HepG2 (cell line): ENCODE measurements at regions of chr22 and their contacts with region 1.

Region 1: GRCh38 chr22:36350751-36351594 is 36.8 kb downstream of the MYH9 start:
- DNase-seq: peak; percentile 91
- ATAC-seq: peak; percentile 68
- H3K4me3 ChIP-seq: peak overlapping the region; percentile 9 to 66 (median 28)
- H3K27ac ChIP-seq: peak overlapping the region; percentile 94
- H3K4me1 ChIP-seq: peaks cover 93% of the 10 kb centered on the region
- H3K27me3 ChIP-seq: no peaks in the 10 kb centered on the region; a peak in 1 of 5 replicates
- CTCF ChIP-seq: peak; percentile 24; the same call in 1 of the 2 replicates
- EP300 ChIP-seq: peak; percentile 42 to 88; a peak in 3 of 4 replicates
- POLR2A ChIP-seq: no peak; a peak in 1 of 4 replicates
- RAD21 ChIP-seq: 0 out of 2 replicates have a peak, but pooled peaks have one; percentile 22

Region 2: GRCh38 chr22:36331306-36331911 is 19.6 kb before region 1 on chr22:
- CTCF ChIA-PET with region 1: no interaction called
- POLR2A ChIA-PET with region 1: interaction called, 36 read pairs
- in situ Hi-C with region 1: no loop called
- intact Hi-C with region 1: loop called (anchors 1 kb)
- DNase-seq: peak; percentile 75
- ATAC-seq: peak; percentile 53; the same call in 2 of the 3 replicates
- H3K4me3 ChIP-seq: no peak overlapping the region
- H3K27ac ChIP-seq: peak overlapping the region; percentile 33
- H3K4me1 ChIP-seq: peaks cover 48% of the 10 kb centered on the region
- H3K27me3 ChIP-seq: no peaks in the 10 kb centered on the region
- CTCF ChIP-seq: no peak
- EP300 ChIP-seq: peak in 1 of 2 experiments; percentile 26; a peak in 1 of 4 replicates
- POLR2A ChIP-seq: no peak
- RAD21 ChIP-seq: no peak

Region 3: GRCh38 chr22:36369922-36370791 is 19.2 kb after region 1 on chr22:
- CTCF ChIA-PET with region 1: no interaction called
- POLR2A ChIA-PET with region 1: interaction called, 97 read pairs
- in situ Hi-C with region 1: no loop called
- intact Hi-C with region 1: loop called (anchors 2 kb)
- DNase-seq: peak; percentile 72
- ATAC-seq: peak; percentile 63
- H3K4me3 ChIP-seq: peak overlapping the region in 1 of 3 experiments; percentile 57; a peak in 2 of 6 replicates
- H3K27ac ChIP-seq: peak overlapping the region; percentile 66
- H3K4me1 ChIP-seq: peaks cover 96% of the 10 kb centered on the region
- H3K27me3 ChIP-seq: no peaks in the 10 kb centered on the region
- CTCF ChIP-seq: no peak
- EP300 ChIP-seq: 0 out of 4 replicates have a peak, but pooled peaks of 1 of the 2 experiments have one; percentile 40
- POLR2A ChIP-seq: no peak
- RAD21 ChIP-seq: no peak

Region 4: GRCh38 chr22:36419177-36419911 is 68.4 kb after region 1 on chr22:
- CTCF ChIA-PET with region 1: no interaction called
- POLR2A ChIA-PET with region 1: interaction called, 32 read pairs
- in situ Hi-C with region 1: no loop called
- intact Hi-C with region 1: loop called (anchors 5 kb)
- DNase-seq: peak; percentile 100
- ATAC-seq: peak; percentile 88
- H3K4me3 ChIP-seq: peak overlapping the region in 2 of 3 experiments; percentile 49 to 53; a peak in 5 of 6 replicates
- H3K27ac ChIP-seq: peak overlapping the region; percentile 88
- H3K4me1 ChIP-seq: peaks cover 83% of the 10 kb centered on the region
- H3K27me3 ChIP-seq: no peaks in the 10 kb centered on the region
- CTCF ChIP-seq: peak; percentile 34
- EP300 ChIP-seq: peak; percentile 44 to 99; a peak in 3 of 4 replicates
- POLR2A ChIP-seq: peak; percentile 48 to 57; a peak in 3 of 4 replicates
- RAD21 ChIP-seq: peak; percentile 49

Region 5: GRCh38 chr22:36439481-36440271 is 88.7 kb after region 1 on chr22:
- CTCF ChIA-PET with region 1: no interaction called
- POLR2A ChIA-PET with region 1: interaction called, 19 read pairs
- in situ Hi-C with region 1: no loop called
- intact Hi-C with region 1: no loop called
- DNase-seq: peak; percentile 53
- ATAC-seq: peak; percentile 45
- H3K4me3 ChIP-seq: peak overlapping the region in 1 of 3 experiments; percentile 25; a peak in 2 of 6 replicates
- H3K27ac ChIP-seq: peak overlapping the region; percentile 34
- H3K4me1 ChIP-seq: peaks cover 83% of the 10 kb centered on the region
- H3K27me3 ChIP-seq: no peaks in the 10 kb centered on the region; a peak in 1 of 5 replicates
- CTCF ChIP-seq: no peak
- EP300 ChIP-seq: no peak; a peak in 1 of 4 replicates
- POLR2A ChIP-seq: no peak
- RAD21 ChIP-seq: no peak

Region 6: GRCh38 chr22:36481393-36482168 is 130.6 kb after region 1 on chr22 and contains the start of gene TXN2:
- CTCF ChIA-PET with region 1: no interaction called
- POLR2A ChIA-PET with region 1: interaction called, 13 read pairs
- in situ Hi-C with region 1: no loop called
- intact Hi-C with region 1: no loop called
- DNase-seq: peak; percentile 91
- ATAC-seq: peak; percentile 92
- H3K4me3 ChIP-seq: peak within 1 kb of the TSS; percentile 69 to 88 (median 88)
- H3K27ac ChIP-seq: peak within 1 kb of the TSS; percentile 96
- H3K4me1 ChIP-seq: peaks cover 24% of the 10 kb centered on the region
- H3K27me3 ChIP-seq: no peaks in the 10 kb centered on the region; a peak in 1 of 5 replicates
- CTCF ChIP-seq: no peak
- EP300 ChIP-seq: peak; percentile 10 to 13; a peak in 2 of 4 replicates
- POLR2A ChIP-seq: peak; percentile 89 to 90
- RAD21 ChIP-seq: no peak
- total RNA-seq, gene TXN2: 41.4 and 61.4 TPM in 2 replicates

Region 7: GRCh38 chr22:36595940-36596339 is 245.0 kb after region 1 on chr22:
- CTCF ChIA-PET with region 1: no interaction called
- POLR2A ChIA-PET with region 1: no interaction called
- in situ Hi-C with region 1: no loop called
- intact Hi-C with region 1: no loop called
- DNase-seq: no peak
- ATAC-seq: no peak
- H3K4me3 ChIP-seq: no peak overlapping the region
- H3K27ac ChIP-seq: no peak overlapping the region
- H3K4me1 ChIP-seq: no peaks in the 10 kb centered on the region
- H3K27me3 ChIP-seq: peaks cover 3 to 54% of the 10 kb centered on the region in 2 experiments; a peak in 4 of 5 replicates
- CTCF ChIP-seq: no peak
- EP300 ChIP-seq: no peak
- POLR2A ChIP-seq: no peak
- RAD21 ChIP-seq: no peak